ENCODE measurements at regions of chr9 and their contacts with region 1.

Region 1: GRCh38 chr9:121317742-121318489 is 50.0 kb downstream of the GSN start:
- DNase-seq: peak in 1 of 3 donors; percentile 31
- ATAC-seq: no peak
- H3K4me3 ChIP-seq: no peak overlapping the region
- H3K4me1 ChIP-seq: peaks cover 10% of the 10 kb centered on the region
- CTCF ChIP-seq: no peak

Region 2: GRCh38 chr9:121253821-121254471 is 64.0 kb before region 1 on chr9:
- intact Hi-C with region 1: no loop called
- DNase-seq: no peak
- ATAC-seq: no peak
- H3K4me3 ChIP-seq: no peak overlapping the region
- H3K4me1 ChIP-seq: no peaks in the 10 kb centered on the region
- CTCF ChIP-seq: no peak

Region 3: DNA sequence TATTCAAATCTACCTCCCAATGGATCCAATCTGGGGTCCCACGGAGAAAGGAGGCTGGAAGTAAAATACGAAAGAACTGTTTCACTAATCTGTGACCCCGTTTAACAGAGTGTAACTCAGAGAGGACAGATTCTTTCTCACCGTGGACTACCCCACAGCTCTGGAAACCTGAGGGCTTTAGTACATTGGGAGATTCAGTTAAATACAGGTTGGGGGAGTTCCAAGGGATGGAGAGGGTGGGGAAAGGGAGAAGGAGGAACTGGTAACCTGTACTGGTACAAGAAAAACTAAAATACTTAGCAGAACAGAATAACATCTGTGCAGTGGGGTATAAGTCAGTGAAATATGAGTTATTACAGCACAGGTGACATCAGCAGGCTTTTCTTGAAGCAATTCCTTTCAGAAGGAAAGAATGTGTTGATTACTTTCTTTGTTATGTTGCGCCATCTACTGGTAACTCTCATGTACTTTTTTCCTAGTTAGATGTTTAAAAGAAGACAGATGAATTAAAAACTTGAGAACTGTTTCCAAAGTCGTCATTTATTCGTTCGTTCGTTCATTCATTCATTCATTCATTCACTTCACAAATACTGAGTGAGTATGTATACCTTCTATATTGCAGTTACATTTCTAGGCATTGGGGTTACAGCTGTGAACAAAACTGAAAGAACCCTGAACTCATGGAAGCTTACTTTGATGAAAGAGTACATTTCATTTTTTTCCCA is 82.1 kb after region 1 on chr9:
- intact Hi-C with region 1: loop called in 1 of 2 experiments (anchors 5 kb)
- DNase-seq: peak in 1 of 3 donors; percentile 24
- ATAC-seq: peak; percentile 82
- H3K4me3 ChIP-seq: no peak overlapping the region
- H3K4me1 ChIP-seq: no peaks in the 10 kb centered on the region
- CTCF ChIP-seq: peak; percentile 30

Region 4: DNA sequence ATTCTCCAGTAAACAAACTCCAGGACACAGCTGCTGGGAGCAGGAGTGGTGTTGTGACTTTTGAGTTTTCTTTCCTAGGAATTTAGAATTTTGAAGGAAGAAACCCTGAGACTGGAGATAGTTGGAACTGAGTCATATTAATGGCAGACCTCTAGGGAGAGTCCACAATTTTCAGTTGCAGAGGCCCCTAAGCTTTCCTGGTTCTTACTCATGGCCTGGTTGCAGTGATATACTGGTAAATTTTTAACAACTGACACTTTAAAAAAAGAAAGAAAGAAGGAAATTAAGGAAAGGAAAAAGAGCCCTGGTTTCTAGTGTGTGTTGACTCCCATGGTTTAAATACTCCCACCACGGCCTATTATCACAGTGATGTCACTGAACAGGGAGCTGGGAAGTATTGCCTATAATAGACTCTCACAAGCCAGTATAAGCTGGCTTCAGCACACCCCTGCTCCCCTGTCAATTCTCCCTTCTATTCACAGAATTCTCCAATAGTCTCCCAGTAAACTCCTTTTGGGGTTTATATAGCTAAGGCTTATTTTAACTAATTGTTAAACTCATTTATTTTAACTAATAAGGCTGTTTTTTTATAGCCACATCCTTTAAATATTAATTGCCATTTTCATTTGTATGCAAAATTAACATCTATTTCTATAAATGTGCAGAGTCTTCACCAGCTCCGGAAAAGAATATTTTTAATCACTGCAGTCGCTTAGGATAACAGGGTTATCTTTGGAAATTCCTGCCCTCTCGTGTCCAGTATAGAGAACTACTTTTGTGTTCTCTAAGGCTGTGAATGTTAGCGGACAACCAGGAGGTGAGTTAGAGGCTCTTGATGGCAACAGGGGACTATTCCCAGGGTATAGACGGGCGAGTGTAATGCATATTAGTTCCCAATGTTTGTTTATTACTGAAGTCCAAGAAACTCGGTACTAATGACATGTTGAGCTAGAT is 122.1 kb after region 1 on chr9:
- intact Hi-C with region 1: no loop called
- DNase-seq: no peak
- ATAC-seq: no peak
- H3K4me3 ChIP-seq: no peak overlapping the region
- H3K4me1 ChIP-seq: no peaks in the 10 kb centered on the region
- CTCF ChIP-seq: no peak